AG04449 (cell line): ENCODE measurements at regions of chr9 and their contacts with region 1.

Region 1: GRCh38 chr9:112361601-112362000 is 18.3 kb upstream of the HSDL2 start:
- DNase-seq: no peak
- H3K4me3 ChIP-seq: no peak overlapping the region
- CTCF ChIP-seq: peak; percentile 5

Region 2: DNA sequence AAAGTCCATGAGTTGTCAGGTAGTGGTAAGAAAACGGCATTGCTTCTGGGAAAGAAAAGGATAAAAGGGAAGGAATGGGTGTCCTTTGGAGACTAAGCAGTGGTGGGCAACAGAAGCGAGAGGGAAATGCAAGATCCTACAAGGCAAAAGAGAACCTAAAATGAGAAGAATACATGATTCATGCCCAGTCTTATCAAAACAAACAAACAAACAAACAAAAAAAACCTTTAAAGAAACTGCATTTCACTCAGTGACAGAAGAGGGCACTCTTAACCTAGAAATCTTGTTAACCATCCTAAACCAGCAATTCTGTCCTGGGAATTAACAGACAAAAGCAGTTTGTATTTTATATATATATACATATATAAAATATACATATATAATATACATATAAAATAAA is 275.0 kb before region 1 on chr9:
- CTCF ChIA-PET with region 1: interaction called, 180 read pairs
- POLR2A ChIA-PET with region 1: no interaction called
- DNase-seq: no peak
- H3K4me3 ChIP-seq: no peak overlapping the region
- CTCF ChIP-seq: peak; percentile 34

Region 3: GRCh38 chr9:112097712-112098688 is 263.6 kb before region 1 on chr9:
- CTCF ChIA-PET with region 1: interaction called, 241 read pairs
- POLR2A ChIA-PET with region 1: interaction called, 3 read pairs
- DNase-seq: no peak
- H3K4me3 ChIP-seq: no peak overlapping the region
- CTCF ChIP-seq: peak; percentile 74

Region 4: DNA sequence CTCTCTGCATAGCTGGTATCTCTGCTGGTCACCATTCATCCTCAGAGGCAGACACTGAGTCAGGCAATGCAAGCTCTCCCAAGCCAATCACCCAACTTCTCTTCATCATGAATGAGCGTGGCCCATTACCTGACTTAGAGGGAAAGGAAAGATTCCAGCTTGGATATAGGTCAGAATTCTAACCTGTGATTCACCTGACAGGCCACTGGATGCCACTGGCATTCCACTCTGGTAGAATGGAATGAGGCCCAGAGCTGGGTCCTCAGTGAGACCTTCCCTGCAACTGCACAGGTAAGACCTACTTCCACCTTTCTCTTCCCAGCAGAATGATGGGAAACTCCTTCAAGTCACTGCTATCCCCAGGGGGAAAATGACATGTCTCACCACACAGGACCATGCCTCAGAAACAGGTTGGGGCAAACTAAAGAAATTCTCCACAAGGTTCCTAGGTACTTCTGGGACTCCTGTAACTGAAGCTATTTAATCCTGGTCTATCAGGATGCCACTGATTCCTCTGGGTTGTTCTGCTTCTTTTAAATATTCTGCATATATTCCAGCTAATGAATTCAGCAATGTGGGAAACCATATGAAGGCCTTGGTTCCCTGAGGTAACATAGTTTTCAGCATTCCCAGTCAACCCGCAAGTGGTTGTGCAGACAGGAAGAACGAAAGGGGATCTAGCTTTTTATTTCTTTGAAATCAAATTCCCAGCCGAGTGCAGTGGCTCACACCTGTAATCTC is 248.5 kb before region 1 on chr9:
- CTCF ChIA-PET with region 1: interaction called, 36 read pairs
- POLR2A ChIA-PET with region 1: no interaction called
- DNase-seq: no peak
- H3K4me3 ChIP-seq: no peak overlapping the region
- CTCF ChIP-seq: peak; percentile 17

Region 5: DNA sequence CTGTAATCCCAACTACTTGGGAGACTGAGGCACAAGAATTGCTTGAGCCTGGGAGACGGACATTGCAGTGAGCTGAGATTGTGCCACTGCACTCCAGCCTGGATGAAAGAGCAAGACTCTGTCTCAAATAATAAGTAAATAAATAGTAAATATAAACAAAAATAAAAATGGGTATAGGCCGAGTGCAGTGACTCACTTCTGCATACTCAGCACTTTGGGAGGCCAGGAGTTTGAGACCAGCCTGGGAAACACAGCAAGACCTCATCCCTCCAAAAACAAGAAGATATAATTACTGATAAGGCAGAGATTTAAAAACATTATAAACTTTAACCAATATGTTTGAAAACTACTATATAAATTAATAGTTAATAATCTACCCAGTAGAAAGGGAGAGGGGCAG is 148.7 kb before region 1 on chr9:
- CTCF ChIA-PET with region 1: no interaction called
- POLR2A ChIA-PET with region 1: no interaction called
- DNase-seq: no peak
- H3K4me3 ChIP-seq: no peak overlapping the region
- CTCF ChIP-seq: no peak

Region 6: DNA sequence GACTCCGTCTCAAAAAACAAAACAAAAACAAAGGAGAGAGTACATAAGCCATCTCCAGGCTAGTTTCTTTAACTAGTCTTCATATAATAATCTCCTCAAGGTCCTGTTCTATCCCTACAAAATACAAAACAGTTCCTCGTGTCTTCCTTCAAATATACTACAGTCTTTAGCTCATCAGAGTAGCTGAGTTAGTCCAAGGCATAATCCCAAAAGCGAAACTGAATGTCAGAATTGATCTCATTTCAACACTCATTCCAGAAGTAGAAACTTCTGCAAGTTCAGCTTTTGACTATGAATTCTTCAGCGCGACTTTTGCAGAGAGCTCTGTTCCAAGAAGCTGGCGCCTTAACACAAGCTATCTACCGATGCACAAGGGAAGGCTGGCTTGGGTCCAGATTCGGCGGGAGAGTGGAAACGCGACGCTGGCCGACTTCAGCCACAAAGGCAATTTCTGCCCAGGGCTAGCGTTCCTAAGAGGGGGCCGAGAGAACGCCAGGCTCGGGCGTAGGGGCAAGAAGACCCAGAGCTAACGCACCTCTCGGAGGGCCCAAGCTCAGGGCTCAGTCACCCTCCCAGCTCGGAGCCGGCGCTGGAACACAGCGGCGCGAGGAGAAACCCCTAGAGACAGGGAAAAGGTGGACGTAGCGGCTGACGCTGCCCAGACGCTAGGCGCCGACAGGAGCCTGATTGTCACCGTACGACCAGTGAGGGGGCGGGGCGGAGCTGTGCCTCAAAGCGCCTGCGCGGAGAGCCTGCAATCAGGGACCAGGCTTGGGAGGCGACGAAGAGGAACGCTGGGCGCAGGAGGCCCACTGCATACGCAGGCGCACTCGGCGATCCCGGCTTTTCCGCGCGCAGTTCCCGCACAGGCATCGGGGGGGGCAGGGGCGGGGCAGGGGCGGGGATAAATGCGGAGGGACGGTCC is 17.8 kb after region 1 on chr9:
- CTCF ChIA-PET with region 1: interaction called, 27 read pairs
- POLR2A ChIA-PET with region 1: no interaction called
- DNase-seq: peak; percentile 78
- H3K4me3 ChIP-seq: peak overlapping the region; percentile 90
- CTCF ChIP-seq: peak; percentile 5